Gastrocnemius medialis (tissue), 4 donors: ENCODE measurements at regions of chr16 and their contacts with region 1.

Region 1: DNA sequence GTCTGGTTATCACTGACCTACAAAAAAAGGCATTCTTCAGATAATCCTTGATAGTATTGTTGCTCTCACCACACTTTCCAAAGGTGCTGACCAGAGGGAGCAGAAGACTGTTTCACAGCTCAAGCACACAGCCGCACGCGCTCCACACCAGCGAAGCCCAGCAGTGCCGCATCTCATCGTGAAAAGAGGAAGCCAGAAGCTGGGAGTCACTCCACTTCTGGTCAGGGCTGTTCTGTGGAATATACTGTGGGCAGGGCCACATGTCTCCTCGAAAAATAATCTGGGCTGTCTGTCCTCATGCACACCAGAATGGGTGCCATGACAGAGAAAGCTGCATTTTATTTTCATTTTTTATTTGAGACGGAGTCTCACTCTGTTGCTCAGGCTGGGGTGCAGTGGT is 7.3 kb upstream of the PRSS36 start:
- DNase-seq: no peak
- ATAC-seq: no peak
- H3K4me3 ChIP-seq: no peak overlapping the region
- H3K27ac ChIP-seq: no peak overlapping the region
- H3K4me1 ChIP-seq: no peaks in the 10 kb centered on the region
- H3K27me3 ChIP-seq: no peaks in the 10 kb centered on the region
- CTCF ChIP-seq: no peak
- POLR2A ChIP-seq: no peak

Region 2: GRCh38 chr16:31010585-31011325 is 146.4 kb before region 1 on chr16 and contains the start of gene STX1B:
- in situ Hi-C with region 1: loop called in 1 of 4 experiments (anchors 25 kb)
- intact Hi-C with region 1: no loop called
- DNase-seq: no peak
- ATAC-seq: no peak
- H3K4me3 ChIP-seq: no peak within 1 kb of the TSS
- H3K27ac ChIP-seq: no peak within 1 kb of the TSS
- H3K4me1 ChIP-seq: no peaks in the 10 kb centered on the region
- H3K27me3 ChIP-seq: peaks cover 40 to 55% (median 50%) of the 10 kb centered on the region in 3 donors
- CTCF ChIP-seq: no peak
- POLR2A ChIP-seq: no peak
- total RNA-seq, gene STX1B: 0.13 to 0.36 TPM in 2 of 4 donors, not detected in the others

Region 3: GRCh38 chr16:31094424-31095120 is 62.6 kb before region 1 on chr16 and contains the start of gene VKORC1:
- in situ Hi-C with region 1: loop called in 1 of 4 experiments (anchors 10 kb)
- intact Hi-C with region 1: no loop called
- DNase-seq: peak; percentile 95 to 96
- ATAC-seq: peak; percentile 94 to 98
- H3K4me3 ChIP-seq: peak within 1 kb of the TSS; percentile 74 to 86 (median 77)
- H3K27ac ChIP-seq: peak within 1 kb of the TSS; percentile 88 to 94 (median 94)
- H3K4me1 ChIP-seq: peaks cover 8 to 13% of the 10 kb centered on the region in 2 donors
- H3K27me3 ChIP-seq: no peaks in the 10 kb centered on the region
- CTCF ChIP-seq: peak in 3 of 5 experiments; percentile 10 to 12 (median 11)
- POLR2A ChIP-seq: peak; percentile 76 to 79
- total RNA-seq, gene VKORC1: 20.1 to 35.9 (median 32.9) TPM